Cardiac septum (tissue), 1 donor: ENCODE measurements at regions of chr19 and their contacts with region 1.

Region 1: GRCh38 chr19:56076498-56076897 is 44.6 kb downstream of the ZNF787 start:
- DNase-seq: no peak

Region 2: DNA sequence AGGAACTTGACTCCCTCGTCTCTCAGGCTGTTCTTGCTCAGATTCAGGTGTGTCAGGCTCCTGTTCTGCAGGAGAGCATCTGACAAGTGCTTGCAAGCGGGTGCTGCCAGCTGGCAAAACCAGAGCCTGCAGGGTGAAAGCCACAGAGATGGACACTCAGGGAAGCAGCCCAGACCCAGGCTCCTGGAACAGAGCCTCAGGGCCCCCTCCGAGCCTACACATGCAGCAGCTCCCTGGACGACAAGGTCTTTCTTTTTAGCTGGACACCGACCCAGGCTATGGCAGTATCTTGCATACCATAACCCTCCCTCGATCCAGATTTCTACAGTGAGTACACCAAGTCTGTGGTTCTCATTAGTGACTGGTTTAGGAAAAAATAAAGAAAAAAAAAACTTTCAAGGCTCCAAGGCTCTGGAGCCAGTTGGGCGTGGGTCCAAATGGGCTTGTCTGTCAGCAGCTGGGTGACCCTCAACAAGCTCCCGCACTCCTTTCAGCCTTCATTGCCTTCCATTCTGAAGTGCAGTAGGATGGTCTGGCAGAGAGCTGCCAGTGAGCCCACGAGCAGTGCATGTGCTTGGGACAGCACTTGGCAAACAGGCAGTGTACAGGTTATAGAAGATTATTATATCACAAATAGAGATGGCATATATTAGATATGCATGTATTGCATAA is 174.3 kb before region 1 on chr19:
- intact Hi-C with region 1: no loop called
- DNase-seq: no peak

Region 3: DNA sequence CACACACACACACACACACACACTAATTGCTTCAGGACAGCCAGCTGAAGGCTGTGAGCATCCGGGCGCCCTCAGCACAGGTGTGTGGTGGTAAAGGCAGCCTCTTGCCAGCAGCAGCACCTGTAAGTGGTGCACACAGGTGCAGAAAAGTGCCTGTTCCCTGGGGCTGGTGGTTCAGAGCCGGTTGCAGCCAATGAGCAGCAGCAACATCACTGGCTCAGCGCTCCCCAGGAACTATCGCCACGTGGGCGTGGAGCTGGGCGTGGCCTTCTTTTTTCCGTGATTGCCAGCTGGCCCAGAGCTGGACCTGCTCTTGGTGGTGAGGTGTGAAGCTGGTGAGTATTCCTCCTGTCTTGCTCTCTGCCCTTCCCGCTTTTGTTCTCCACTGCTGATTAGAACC is 90.0 kb before region 1 on chr19 and contains the start of gene NLRP5:
- intact Hi-C with region 1: no loop called
- DNase-seq: no peak
- total RNA-seq, gene NLRP5: not detected

Region 4: DNA sequence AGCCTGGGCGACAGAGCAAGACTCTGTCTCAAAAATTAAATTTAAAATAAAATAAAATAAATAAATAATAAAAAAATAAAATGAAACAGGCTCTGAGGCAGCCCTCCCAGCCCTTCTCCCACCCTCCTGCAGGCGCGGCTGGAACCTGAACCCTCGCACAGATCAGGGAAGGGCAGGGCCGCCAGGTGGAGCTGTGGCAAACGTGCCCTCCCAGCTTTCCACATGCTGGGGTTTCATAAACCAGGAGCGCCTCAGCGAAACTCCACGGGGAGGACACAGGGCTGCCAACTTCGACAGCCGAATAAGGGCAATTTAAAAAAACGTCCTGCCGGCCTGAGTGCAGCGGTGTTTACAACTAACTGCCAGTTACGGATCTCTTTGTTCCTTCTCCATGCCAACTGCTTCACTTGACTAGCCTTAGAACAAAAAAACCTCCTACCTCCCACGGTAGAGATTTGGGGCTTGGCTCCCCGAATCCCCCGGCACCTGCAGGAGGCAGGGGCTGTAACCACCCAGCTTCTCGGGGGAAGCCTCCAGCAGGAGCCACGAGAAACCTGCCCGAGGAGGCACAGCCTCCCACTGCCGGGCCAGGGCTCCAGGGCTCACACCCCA is 28.7 kb after region 1 on chr19:
- intact Hi-C with region 1: no loop called
- DNase-seq: peak; percentile 87

Region 5: GRCh38 chr19:56170261-56170660 is 93.8 kb after region 1 on chr19:
- intact Hi-C with region 1: loop called (anchors 1 kb)
- DNase-seq: no peak

Region 6: DNA sequence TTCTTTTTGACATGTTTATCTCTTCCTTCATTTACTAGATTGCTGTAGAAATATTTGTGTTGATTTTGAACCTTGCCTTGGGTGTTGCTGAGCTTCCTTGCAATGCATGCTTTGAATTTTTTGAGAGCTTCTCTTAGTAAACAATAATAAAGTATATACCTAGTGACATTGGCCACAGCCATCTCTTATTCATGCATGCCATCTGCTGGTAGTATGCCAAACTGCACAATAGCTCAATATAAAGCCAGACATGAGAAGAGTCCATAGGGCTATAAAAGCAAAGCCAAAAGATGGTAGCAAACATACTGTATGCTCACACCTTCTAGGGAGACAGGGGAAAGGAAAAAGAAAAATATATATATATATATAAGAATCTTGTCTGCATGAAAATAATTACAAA is 257.0 kb after region 1 on chr19:
- intact Hi-C with region 1: loop called (anchors 5 kb)
- DNase-seq: no peak